Sigmoid colon (tissue), 7 donors: ENCODE measurements at regions of chr2 and their contacts with region 1.

Region 1: GRCh38 chr2:42047488-42048298 is at the start of gene PKDCC:
- DNase-seq: peak; percentile 95
- H3K4me3 ChIP-seq: peak within 1 kb of the TSS; percentile 68 to 98 (median 80)
- H3K27ac ChIP-seq: peak within 1 kb of the TSS; percentile 96 to 99 (median 96)
- H3K4me1 ChIP-seq: peaks cover 0 to 46% (median 42%) of the 10 kb centered on the region in 4 donors
- H3K27me3 ChIP-seq: no peaks in the 10 kb centered on the region
- CTCF ChIP-seq: no peak
- EP300 ChIP-seq: no peak
- POLR2A ChIP-seq: peak; percentile 23 to 36
- total RNA-seq, gene PKDCC: 64.8 to 106 (median 96.1) TPM

Region 2: DNA sequence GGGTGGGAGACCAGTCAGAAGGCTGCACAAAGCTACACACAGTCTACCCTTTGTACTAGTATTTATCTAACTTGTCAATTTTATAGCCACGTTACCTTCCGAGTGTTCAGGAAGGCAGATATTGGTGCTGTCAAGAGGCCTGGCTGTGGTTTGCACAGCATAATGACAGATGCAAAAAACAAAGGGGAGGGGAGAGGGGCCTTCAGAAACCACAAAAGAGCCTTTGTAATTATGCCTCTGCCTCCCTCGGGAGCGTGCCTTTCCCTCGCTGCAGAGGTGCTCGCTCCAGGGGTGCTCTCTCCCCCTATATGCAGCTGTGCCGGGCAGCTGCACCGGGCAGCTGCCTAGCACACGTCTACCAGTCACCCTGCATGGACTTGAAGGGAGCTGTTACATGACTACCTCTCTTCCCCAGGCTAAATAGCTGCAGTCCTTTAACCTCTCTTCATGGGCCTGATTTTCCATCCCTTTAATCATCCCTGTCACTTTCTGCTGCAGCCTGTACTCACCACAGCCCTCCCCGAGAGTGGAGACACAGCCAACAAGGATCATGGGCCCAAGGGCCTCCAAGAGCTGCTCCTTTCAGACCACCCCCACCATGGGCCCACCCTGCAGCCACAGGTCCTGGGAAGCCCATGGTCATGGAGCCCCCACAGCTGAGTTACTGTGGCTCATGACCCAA is 168.3 kb before region 1 on chr2:
- intact Hi-C with region 1: no loop called
- DNase-seq: no peak
- H3K4me3 ChIP-seq: no peak overlapping the region
- H3K27ac ChIP-seq: peak overlapping the region in 1 of 4 donors; percentile 39
- H3K4me1 ChIP-seq: peaks cover 0 to 29% (median 17%) of the 10 kb centered on the region in 4 donors
- H3K27me3 ChIP-seq: no peaks in the 10 kb centered on the region
- CTCF ChIP-seq: no peak
- EP300 ChIP-seq: no peak
- POLR2A ChIP-seq: no peak

Region 3: GRCh38 chr2:41928526-41928925 is 119.2 kb before region 1 on chr2:
- intact Hi-C with region 1: loop called (anchors 2 kb)
- DNase-seq: no peak
- H3K4me3 ChIP-seq: no peak overlapping the region
- H3K27ac ChIP-seq: peak overlapping the region in 3 of 4 donors; percentile 83 to 90 (median 84)
- H3K4me1 ChIP-seq: peaks cover 0 to 83% (median 81%) of the 10 kb centered on the region in 4 donors
- H3K27me3 ChIP-seq: no peaks in the 10 kb centered on the region
- CTCF ChIP-seq: no peak
- EP300 ChIP-seq: no peak
- POLR2A ChIP-seq: no peak

Region 4: GRCh38 chr2:41966431-41966893 is 81.2 kb before region 1 on chr2:
- intact Hi-C with region 1: loop called (anchors 1 kb)
- DNase-seq: peak; percentile 92
- H3K4me3 ChIP-seq: no peak overlapping the region
- H3K27ac ChIP-seq: peak overlapping the region; percentile 69 to 84 (median 74)
- H3K4me1 ChIP-seq: peaks cover 4 to 57% (median 56%) of the 10 kb centered on the region in 4 donors
- H3K27me3 ChIP-seq: no peaks in the 10 kb centered on the region
- CTCF ChIP-seq: no peak
- EP300 ChIP-seq: peak in 2 of 4 donors; percentile 31 to 57
- POLR2A ChIP-seq: no peak

Region 5: DNA sequence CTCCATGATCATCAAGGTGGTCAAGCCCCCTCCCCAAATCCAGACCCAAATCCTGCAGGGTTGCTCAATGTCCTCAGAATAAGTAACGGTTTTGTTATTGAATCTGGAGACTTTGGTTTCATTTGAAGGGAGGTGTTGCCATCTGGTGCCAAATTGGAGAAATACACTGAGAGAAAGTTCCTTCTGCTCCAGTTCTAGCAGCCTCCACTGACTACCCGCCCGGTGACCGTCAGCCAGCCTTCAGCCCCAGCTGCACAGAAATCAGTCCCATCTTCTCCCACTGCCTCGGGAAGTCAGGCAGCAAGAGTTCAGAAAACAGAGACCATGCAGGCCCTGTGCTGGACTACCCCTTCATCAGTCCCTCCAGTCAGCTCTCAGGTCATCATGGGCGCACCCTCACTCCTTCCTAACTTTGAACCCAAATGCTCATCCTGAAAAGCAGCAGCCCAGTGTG is 38.8 kb after region 1 on chr2:
- intact Hi-C with region 1: loop called (anchors 2 kb)
- DNase-seq: no peak
- H3K4me3 ChIP-seq: no peak overlapping the region
- H3K27ac ChIP-seq: no peak overlapping the region
- H3K4me1 ChIP-seq: peaks cover 0 to 29% (median 27%) of the 10 kb centered on the region in 4 donors
- H3K27me3 ChIP-seq: no peaks in the 10 kb centered on the region
- CTCF ChIP-seq: peak; percentile 76 to 89 (median 80)
- EP300 ChIP-seq: no peak
- POLR2A ChIP-seq: no peak